ENCODE measurements at regions of chr17 and their contacts with region 1.

Region 1: GRCh38 chr17:77677211-77677610 is 281.3 kb upstream of the TNRC6C start:
- DNase-seq: peak; percentile 36 to 40
- ATAC-seq: peak in 5 of 8 donors; percentile 31 to 65 (median 62)
- H3K4me3 ChIP-seq: peak overlapping the region in 2 of 10 donors; percentile 14 to 23
- H3K27ac ChIP-seq: peak overlapping the region in 7 of 10 donors; percentile 20 to 75 (median 50)
- H3K4me1 ChIP-seq: peaks cover 11 to 47% (median 27%) of the 10 kb centered on the region in 9 donors
- H3K27me3 ChIP-seq: no peaks in the 10 kb centered on the region
- CTCF ChIP-seq: no peak

Region 2: DNA sequence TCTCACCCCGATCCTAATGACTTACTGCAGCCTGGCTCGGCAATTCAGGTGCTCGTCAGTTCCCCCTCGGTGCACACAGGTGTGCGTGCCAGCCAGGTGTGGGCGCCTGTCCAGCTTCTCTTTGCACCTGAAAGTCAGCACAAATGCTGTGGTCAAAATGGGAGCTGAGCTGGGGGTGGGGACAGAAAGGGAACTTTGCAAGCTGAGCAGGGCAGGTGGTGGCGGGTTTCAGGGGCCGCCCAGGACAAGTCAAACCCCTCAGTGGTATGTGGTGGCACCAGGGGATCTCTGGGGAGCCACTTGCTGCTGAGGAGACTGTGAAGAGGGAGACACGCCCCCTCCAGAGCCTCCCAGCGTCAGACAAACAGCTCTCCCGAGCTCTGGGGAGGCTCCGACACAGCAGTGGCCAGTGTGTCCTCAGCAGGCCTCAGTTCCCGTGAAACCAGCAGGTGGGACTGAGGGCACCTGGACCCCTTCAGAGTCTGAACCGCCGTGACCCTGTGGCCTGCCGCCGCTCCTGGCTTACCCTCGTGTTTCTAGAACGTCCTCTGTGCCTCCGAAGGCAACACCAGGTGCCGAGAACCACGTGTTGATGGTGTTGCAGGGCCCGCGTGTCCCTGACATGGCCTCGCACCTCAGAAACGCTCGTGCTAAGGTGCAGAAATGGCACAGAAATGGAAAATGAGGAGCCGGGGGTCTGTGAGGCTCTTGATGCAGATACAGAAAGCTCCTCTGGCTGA is 47.8 kb after region 1 on chr17:
- intact Hi-C with region 1: loop called in 1 of 10 experiments (anchors 5 kb)
- DNase-seq: no peak
- ATAC-seq: no peak
- H3K4me3 ChIP-seq: no peak overlapping the region
- H3K27ac ChIP-seq: no peak overlapping the region
- H3K4me1 ChIP-seq: peaks cover 0 to 31% (median 11%) of the 10 kb centered on the region in 9 donors
- H3K27me3 ChIP-seq: no peaks in the 10 kb centered on the region
- CTCF ChIP-seq: no peak

Measured in heart right ventricle (tissue), 16 donors.